Activated CD4-positive, alpha-beta T cell treated with anti-CD3 and anti-CD28 coated beads for 36 hours (primary cell): ENCODE measurements at regions of chr14 and their contacts with region 1.

Region 1: DNA sequence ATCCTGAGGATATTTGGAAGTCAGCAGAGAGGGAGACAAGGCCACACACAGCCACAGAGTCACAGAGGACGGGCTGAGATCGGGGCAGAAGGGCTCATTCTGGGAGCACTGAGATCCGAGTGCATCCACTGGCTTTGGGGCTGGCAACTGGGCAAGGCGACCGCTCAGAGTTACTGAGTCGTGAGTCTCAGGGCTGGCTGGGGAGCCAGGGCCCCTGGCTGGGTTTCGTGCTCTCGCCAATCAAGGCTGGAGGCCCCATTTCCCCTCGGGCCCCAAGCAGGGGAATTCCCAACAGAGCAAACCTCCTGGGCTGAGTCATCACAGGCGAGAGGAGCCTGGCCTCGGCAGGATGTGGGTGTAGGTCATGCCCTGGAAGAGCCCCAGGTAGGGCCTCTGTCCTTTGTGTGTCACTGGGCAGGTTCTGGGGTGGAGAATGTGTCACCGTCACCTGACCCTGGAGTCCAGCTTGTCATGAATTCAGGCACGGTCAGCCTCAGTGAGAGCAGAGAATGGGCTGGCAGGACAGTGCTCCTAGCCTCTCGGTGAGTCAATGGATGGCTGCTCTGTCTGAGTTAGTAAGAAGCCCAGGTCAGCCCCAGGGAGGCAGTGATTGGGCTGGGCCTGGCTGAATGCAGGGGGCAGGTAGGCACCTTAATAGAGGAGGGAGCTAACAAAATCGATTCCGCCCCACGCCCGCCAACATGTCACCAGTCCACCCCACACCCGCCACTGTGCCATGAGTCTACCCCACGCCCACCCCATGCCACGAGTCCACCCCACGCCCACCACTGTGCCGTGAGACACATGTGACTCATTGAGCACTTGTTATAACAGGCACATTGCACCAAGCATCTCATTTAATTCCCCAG is 16.9 kb downstream of the ASB2 start:
- DNase-seq: peak; percentile 97
- ATAC-seq: peak; percentile 74
- H3K4me3 Mint-ChIP-seq: peak overlapping the region; percentile 70
- H3K27ac Mint-ChIP-seq: peak overlapping the region; percentile 100
- H3K4me1 Mint-ChIP-seq: peaks cover 96% of the 10 kb centered on the region
- H3K27me3 Mint-ChIP-seq: no peaks in the 10 kb centered on the region

Region 2: DNA sequence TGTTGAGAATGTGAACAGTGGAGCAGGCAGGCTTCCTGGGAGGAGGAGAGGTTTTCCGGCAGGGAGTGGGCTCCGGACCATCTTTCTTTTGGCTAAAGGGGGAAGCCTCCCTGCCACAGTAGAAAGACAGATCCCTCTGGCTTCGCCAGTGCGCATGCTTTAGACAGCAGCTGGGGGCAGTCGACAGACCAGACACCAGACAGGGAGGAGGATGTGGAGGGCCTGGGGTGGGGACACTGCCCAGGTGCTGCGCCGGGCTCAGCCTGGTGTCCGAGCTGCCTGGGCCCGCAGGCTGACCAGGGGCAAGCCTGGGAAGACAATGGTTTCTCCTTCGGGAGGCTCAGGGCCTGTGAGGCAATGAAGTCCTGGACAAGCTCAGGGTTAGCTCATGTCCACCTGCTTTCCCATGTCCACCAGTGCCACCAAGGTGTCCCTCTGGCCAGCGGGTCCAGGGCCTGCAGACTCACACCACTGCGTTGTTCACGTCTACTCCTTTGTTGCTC is 238.4 kb before region 1 on chr14:
- CTCF ChIA-PET with region 1: no interaction called
- POLR2A ChIA-PET with region 1: no interaction called
- intact Hi-C with region 1: no loop called
- DNase-seq: no peak
- ATAC-seq: no peak
- H3K4me3 Mint-ChIP-seq: no peak overlapping the region
- H3K27ac Mint-ChIP-seq: no peak overlapping the region
- H3K4me1 Mint-ChIP-seq: no peaks in the 10 kb centered on the region
- H3K27me3 Mint-ChIP-seq: no peaks in the 10 kb centered on the region

Region 3: DNA sequence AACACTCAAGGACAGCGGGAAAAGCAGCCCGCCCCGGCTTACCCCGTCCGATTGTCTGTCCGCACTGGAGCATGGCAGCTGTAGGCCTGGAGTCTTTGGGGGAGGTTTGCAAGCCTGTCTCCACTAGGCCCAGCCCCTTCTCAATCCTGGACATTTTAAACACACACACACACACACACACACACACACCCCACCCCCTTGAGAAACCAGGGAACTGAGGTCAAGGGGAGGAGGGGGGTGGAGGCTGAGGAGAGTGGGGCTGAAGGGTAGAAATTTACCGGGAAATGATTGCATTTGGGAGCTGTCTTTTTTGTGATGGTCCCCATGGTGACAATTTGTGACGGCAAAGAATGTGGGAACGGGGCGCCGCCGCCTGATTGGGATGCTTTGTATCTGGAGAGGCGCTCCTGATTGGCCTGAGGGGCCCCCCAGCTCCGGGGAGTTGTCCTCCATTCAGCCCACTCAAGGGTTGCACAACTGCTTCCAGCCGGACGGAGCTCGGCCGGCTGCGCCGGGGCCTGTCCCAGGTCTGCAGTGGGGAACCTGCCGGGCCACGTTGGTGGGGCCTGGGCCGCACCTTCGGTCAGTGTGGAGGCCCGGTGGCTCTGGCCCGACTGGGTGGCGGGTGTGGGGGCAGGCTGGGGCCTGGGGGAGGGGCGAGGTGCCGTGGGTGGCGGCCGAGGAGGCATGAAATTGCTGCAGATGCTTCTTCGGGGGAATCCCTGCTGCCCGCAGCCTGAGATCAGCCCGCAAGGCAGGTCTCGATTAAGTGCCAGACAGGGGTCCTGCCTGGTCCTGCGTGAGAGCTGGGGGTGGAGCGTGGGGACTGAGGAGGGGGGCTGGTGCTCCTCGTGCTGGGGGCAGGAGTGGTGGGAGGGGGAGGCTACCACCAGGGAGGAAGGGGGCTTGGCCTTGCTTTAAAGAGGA is 32.3 kb before region 1 on chr14 and contains the start of gene FAM181A:
- CTCF ChIA-PET with region 1: no interaction called
- POLR2A ChIA-PET with region 1: no interaction called
- intact Hi-C with region 1: no loop called
- DNase-seq: no peak
- ATAC-seq: no peak
- H3K4me3 Mint-ChIP-seq: no peak within 1 kb of the TSS
- H3K27ac Mint-ChIP-seq: no peak within 1 kb of the TSS
- H3K4me1 Mint-ChIP-seq: no peaks in the 10 kb centered on the region
- H3K27me3 Mint-ChIP-seq: no peaks in the 10 kb centered on the region
- total RNA-seq, gene FAM181A: not detected

Region 4: DNA sequence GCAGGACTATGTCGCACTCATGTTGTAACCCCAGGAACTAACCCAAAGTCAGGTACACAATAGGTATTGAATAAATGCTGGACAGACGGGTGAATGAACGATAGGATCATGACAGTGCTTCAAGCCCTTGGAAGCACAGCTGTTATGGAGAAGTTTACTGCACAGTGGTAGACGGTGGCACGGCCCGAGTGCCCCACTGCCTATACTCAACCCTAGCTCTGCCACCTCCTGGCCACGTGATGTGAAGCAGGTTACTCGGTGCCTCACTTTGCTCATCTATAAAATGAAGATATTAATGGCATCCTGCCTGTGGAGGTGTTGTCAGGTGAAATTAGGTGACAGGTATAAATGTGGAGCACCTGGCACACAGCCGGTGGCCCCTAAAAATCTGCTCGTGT is 11.1 kb after region 1 on chr14:
- CTCF ChIA-PET with region 1: interaction called, 51 read pairs
- POLR2A ChIA-PET with region 1: interaction called, 40 read pairs
- intact Hi-C with region 1: loop called (anchors 1 kb)
- DNase-seq: peak; percentile 83
- ATAC-seq: peak; percentile 74
- H3K4me3 Mint-ChIP-seq: peak overlapping the region; percentile 70
- H3K27ac Mint-ChIP-seq: peak overlapping the region; percentile 97
- H3K4me1 Mint-ChIP-seq: peaks cover 75% of the 10 kb centered on the region
- H3K27me3 Mint-ChIP-seq: peaks cover 2% of the 10 kb centered on the region

Region 5: GRCh38 chr14:93994919-93995682 is 35.6 kb after region 1 on chr14:
- CTCF ChIA-PET with region 1: interaction called, 6 read pairs
- POLR2A ChIA-PET with region 1: interaction called, 11 read pairs
- intact Hi-C with region 1: loop called in 1 of 2 experiments (anchors 1 kb)
- DNase-seq: peak; percentile 87
- ATAC-seq: peak; percentile 92
- H3K4me3 Mint-ChIP-seq: no peak overlapping the region
- H3K27ac Mint-ChIP-seq: peak overlapping the region; percentile 64
- H3K4me1 Mint-ChIP-seq: peaks cover 53% of the 10 kb centered on the region
- H3K27me3 Mint-ChIP-seq: no peaks in the 10 kb centered on the region

Region 6: DNA sequence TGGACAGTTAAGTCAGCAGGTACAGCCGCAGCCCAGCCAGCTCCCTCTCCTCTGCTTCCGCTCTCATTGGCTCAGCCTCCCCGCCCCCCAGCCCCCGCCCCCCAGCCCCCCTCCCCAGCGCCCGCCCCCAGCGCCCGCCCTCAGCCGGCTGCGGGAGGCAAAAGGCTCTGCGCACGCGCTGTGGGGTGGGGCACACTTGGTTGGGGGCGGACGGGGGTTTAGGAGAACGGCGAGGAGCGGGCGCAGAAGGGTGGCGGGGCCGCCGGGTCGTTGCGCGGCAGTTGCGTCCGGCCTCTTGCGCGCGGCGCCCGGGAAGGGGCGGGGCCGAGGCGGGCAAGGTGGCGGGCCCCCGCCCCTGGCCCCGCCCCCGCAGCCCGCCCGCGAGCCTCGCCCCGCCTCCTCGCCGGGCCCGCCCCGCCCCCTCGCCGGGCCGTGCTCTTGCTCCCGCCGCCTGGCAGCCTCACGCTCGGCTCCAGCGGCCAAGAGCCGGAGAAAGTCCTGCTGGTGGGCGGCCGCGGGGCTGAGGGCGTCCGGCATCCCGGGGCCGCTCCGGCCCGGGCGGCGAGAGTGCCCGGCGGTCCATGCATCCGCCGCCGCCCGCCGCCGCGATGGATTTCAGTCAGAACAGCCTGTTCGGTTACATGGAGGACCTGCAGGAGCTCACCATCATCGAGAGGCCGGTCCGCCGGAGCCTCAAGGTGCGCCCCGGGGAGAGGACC is 214.6 kb after region 1 on chr14 and contains the start of gene PPP4R4:
- CTCF ChIA-PET with region 1: interaction called, 3 read pairs
- POLR2A ChIA-PET with region 1: no interaction called
- intact Hi-C with region 1: loop called (anchors 5 to 10 kb)
- DNase-seq: peak; percentile 96
- ATAC-seq: peak; percentile 89
- H3K4me3 Mint-ChIP-seq: peak within 1 kb of the TSS; percentile 81
- H3K27ac Mint-ChIP-seq: peak within 1 kb of the TSS; percentile 86
- H3K4me1 Mint-ChIP-seq: peaks cover 44% of the 10 kb centered on the region
- H3K27me3 Mint-ChIP-seq: peaks cover 5% of the 10 kb centered on the region
- total RNA-seq, gene PPP4R4: 21.4 TPM

Region 7: GRCh38 chr14:94392510-94392935 is 433.1 kb after region 1 on chr14:
- CTCF ChIA-PET with region 1: no interaction called
- POLR2A ChIA-PET with region 1: no interaction called
- intact Hi-C with region 1: loop called in 1 of 2 experiments (anchors 5 kb)
- DNase-seq: peak; percentile 84
- ATAC-seq: peak; percentile 67
- H3K4me3 Mint-ChIP-seq: no peak overlapping the region
- H3K27ac Mint-ChIP-seq: peak overlapping the region; percentile 97
- H3K4me1 Mint-ChIP-seq: peaks cover 70% of the 10 kb centered on the region
- H3K27me3 Mint-ChIP-seq: peaks cover 5% of the 10 kb centered on the region

Region 8: DNA sequence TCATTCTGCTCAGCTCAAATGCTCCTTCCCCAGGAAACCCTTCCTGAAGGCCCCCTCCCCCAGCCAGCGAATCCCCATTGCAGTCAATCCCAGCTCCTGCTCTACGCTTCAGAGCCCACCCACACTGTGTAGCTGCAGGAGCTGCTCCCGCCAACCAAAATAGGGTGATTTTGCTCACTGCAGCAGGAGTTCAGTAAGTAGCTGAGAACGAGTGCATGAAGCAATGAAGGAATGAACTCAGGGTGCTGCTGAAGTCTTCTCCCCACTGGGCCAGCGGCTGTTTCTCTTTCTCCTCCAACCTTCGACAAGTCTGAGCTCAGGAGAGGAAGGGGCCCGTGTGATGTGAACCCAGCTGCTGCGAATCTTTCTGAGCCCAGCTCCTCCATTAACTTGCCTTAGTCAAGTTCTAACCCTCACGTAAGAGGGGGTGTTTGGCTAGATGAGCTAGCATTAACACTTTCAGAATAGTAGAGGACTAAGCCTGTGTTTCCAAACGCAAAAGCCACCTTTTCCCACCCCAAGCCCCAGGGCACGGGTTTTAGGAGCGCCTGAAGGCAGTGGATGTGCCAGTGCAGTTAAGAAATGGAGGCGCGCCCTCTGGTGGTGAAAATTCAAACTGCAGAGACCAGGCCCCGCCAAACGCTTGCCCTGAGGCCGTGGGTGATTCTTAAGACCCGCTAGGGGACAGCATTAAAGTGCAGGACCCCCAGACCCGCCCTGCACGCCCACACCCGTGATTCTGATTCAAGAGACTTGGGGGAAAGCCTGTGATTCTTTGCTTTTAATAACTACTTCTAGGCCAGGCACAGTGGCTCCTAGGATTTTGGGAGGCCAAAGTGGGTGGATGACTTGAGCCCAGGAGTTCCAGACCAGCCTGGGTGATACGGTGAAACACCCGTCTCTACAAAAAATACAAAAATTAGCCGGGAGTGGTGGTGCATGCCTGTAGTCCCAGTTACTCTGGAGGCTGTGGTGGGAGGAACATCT is 589.8 kb after region 1 on chr14:
- CTCF ChIA-PET with region 1: no interaction called
- POLR2A ChIA-PET with region 1: no interaction called
- intact Hi-C with region 1: no loop called
- DNase-seq: peak; percentile 84
- ATAC-seq: peak; percentile 74
- H3K4me3 Mint-ChIP-seq: no peak overlapping the region
- H3K27ac Mint-ChIP-seq: no peak overlapping the region
- H3K4me1 Mint-ChIP-seq: no peaks in the 10 kb centered on the region
- H3K27me3 Mint-ChIP-seq: peaks cover 29% of the 10 kb centered on the region